A549 (cell line): ENCODE measurements at regions of chr9 and their contacts with region 1.

Region 1: GRCh38 chr9:121222524-121223171 is 21.0 kb upstream of the RAB14 start:
- DNase-seq: peak in 1 of 2 experiments; percentile 55
- ATAC-seq: peak; percentile 59 to 79; a peak in 4 of 6 replicates
- H3K4me3 ChIP-seq: no peak overlapping the region
- H3K27ac ChIP-seq: no peak overlapping the region
- H3K4me1 ChIP-seq: 0 out of 3 replicates have a peak, but pooled peaks cover 7% of the 10 kb centered on the region
- CTCF ChIP-seq: peak; percentile 78
- EP300 ChIP-seq: no peak
- POLR2A ChIP-seq: no peak
- RAD21 ChIP-seq: peak; percentile 51 to 66

Region 2: DNA sequence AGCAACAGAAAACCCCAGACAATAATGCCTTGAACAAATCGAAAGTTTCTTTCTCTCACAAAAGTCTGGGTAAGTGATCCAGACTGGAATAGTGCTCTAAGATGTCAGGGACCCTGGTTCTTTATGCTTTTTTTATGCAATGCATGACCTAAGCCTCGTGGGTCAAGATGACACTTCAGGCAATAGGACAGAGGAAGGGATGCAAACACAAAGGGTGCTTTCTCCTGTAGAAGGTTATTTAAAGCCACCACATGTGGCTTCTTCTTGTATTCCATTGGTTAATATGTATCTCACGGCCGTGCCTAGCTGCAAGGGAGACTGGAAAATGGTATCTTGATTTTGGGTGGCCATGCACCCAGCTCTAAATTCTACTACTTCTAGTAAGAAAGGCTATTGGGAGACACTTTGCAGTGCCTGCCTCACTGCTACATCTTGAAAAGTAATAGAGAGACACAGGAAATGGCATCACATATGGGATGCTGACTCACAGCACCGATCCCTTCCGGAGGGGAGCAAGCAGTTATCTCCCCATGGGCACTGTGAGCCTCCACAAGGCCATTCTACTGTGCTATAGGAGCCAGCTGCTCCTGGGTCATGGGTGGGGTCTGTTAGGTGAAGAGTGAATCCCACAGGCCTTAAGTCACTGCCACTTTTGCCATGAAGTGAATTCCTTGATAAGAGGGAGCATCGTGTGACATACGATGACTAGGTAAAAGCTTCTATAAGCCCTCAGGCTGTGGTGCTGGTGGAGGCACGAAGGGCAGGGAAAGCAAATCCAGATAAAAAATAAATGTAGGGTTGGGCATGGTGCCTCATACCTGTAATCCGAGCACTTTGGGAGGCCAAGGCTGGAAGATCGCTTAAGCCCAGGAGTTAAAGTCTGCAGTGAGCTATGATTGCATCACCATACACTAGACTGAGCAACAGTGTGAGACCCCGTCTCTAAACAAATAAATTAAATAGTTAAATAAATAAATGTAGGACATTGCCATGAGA is 11.6 kb after region 1 on chr9:
- CTCF ChIA-PET with region 1: interaction called, 22 read pairs
- POLR2A ChIA-PET with region 1: no interaction called
- DNase-seq: no peak
- ATAC-seq: no peak
- H3K4me3 ChIP-seq: no peak overlapping the region
- H3K27ac ChIP-seq: no peak overlapping the region
- H3K4me1 ChIP-seq: 0 out of 3 replicates have a peak, but pooled peaks cover 5% of the 10 kb centered on the region
- CTCF ChIP-seq: no peak
- EP300 ChIP-seq: no peak
- POLR2A ChIP-seq: no peak
- RAD21 ChIP-seq: no peak

Region 3: DNA sequence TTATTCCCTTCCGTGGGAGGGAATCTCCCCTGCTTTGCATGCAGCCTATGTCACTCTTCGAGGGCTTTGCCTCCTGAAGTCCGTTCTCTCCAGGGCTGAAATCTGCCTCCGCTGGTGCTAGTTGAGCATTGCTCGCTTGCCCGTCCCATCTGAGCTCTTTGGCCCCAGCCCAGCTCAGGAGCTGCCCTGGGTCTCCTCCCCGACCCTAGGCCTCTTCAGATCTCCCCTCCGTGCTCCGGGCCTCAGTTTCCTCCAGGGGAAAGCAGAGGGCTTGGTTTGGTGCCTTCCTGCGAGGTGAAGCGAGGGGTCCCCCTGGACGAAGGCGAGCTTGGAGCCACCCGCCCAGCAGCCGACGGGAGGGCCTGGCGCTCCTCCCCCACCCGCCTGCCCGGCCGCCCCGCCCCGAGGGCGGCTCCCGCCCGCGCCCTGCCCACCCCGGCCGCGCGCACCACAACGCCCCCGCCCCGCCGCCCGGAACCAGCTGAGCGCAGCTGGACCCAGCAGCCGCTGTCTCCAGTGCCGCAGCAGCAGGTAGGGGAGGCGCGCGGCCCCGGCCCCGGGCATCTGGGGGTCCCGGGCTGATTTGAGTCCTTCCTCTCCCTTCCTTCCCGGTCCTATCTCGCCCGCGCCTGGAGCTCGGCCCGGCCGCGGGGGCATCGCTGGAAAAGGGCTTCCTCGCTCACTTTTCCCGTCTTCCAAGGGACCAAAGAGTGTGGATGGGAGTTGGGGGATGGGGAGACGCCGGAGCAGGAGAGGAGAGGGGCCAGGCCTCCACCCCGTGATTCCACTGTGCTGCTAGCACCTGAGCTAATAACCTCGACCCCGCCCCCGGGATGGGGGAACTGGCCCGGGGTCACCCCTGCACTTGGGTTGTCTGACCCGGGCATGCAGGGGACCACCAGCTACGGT is 45.3 kb after region 1 on chr9 and contains the start of gene GSN:
- CTCF ChIA-PET with region 1: interaction called, 12 read pairs
- POLR2A ChIA-PET with region 1: interaction called, 3 read pairs
- DNase-seq: peak; percentile 62 to 69
- ATAC-seq: peak; percentile 89 to 92
- H3K4me3 ChIP-seq: peak within 1 kb of the TSS; percentile 95
- H3K27ac ChIP-seq: peak within 1 kb of the TSS; percentile 80 to 92
- H3K4me1 ChIP-seq: peaks cover 28% of the 10 kb centered on the region
- CTCF ChIP-seq: no peak
- EP300 ChIP-seq: no peak
- POLR2A ChIP-seq: peak; percentile 91
- RAD21 ChIP-seq: no peak; a peak in 1 of 5 replicates
- polyA plus RNA-seq, gene GSN: 77.2 and 88.5 TPM in 2 replicates